OCI-LY7 (cell line): ENCODE measurements at regions of chr13 and their contacts with region 1.

Region 1: DNA sequence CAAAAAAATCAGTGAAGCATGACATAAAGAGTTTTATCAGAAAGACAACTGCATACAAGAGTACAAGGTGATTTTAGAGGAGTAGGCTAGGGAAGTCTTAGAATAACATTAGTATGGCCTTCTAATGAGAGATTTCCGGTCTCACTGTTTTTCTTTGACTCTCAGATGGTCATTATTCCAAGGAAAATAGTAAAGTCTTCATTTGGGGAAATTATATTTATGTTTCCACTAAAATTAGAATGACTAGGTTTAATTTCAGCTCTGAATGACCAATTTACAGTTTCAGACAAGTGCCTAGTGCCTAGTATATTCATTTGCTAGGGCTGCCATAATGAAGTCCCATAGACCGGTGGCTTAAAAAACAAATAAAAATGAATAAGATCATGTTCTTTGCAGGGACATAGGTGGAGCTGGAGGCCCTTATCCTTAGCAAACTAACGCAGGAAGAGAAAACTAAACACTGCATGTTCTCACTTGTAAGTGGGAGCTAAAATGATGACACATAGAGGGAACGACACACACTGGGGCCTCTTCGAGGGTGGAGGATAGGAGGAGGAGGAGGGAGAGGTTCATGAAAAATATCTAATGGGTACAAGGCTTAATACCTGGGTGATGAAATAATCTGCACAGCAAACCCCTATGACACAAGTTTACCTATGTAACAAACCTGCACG is 303.1 kb downstream of the PCDH9 start:
- DNase-seq: no peak
- H3K4me3 ChIP-seq: no peak overlapping the region
- H3K27ac ChIP-seq: no peak overlapping the region
- H3K4me1 ChIP-seq: peaks cover 11% of the 10 kb centered on the region
- CTCF ChIP-seq: no peak

Region 2: DNA sequence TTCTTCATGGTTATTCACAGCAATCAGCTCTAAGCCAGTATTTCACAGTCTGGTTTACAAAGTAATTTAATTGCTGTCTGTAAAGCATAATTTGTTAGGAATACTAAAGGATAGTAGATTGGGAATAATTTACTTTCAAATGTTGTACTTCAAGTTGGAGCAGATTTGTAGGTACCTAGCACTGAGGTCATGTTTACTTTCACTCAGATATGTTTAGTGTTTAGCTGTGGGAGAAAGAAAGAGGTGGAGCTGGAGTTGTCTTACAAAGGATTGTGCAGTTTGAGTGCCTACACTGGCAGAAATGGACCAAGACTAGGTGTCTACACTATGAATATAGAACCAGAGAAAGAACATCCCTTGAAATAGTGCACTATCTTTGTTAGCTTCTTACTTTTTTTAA is 161.4 kb before region 1 on chr13:
- CTCF ChIA-PET with region 1: no interaction called
- POLR2A ChIA-PET with region 1: no interaction called
- intact Hi-C with region 1: no loop called
- DNase-seq: no peak
- H3K4me3 ChIP-seq: no peak overlapping the region
- H3K27ac ChIP-seq: no peak overlapping the region
- H3K4me1 ChIP-seq: no peaks in the 10 kb centered on the region
- CTCF ChIP-seq: no peak

Region 3: GRCh38 chr13:66937423-66937822 is 10.4 kb after region 1 on chr13:
- CTCF ChIA-PET with region 1: no interaction called
- POLR2A ChIA-PET with region 1: interaction called, 11 read pairs
- intact Hi-C with region 1: no loop called
- DNase-seq: no peak
- H3K4me3 ChIP-seq: no peak overlapping the region
- H3K27ac ChIP-seq: no peak overlapping the region
- H3K4me1 ChIP-seq: peaks cover 8% of the 10 kb centered on the region
- CTCF ChIP-seq: no peak